AG04449 (cell line): ENCODE measurements at regions of chr6 and their contacts with region 1.

Region 1: DNA sequence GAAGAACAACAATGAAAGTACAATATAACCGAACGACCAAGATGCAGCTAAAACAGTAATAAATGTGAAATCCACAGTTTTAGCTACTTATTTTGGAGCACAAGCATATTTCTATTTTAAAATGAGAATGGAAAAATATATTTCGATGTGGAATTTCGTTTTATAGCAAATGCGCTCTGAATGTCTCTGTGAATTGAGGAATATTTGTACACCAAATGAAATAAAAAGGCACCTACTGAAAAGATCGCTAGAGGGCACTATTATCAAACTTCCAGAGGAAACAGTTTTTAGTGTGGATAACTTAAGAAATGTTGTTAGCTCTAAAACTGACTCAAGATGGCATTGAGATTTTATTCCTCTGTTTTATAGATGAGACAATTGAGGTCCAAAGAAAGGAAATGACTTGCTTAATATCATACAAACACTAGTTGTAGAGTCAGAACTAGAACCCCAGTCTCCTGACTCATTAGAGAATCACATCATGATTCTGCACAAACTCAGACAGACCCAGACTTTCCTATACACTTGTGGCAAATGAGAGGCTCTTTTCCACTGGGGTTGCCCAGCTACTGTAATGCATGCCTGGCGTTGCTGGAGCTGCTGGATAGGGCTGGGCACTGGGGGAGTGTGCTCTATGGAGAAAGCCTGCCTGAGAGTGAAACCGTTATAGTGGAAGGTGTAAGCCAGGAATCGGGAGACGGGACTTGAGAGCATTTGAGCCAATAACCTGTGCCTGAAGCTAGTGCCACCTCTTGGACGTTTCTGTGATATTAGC is 51.9 kb downstream of the GCLC start:
- DNase-seq: no peak
- H3K4me3 ChIP-seq: peak overlapping the region; percentile 31
- CTCF ChIP-seq: peak; percentile 35

Region 2: DNA sequence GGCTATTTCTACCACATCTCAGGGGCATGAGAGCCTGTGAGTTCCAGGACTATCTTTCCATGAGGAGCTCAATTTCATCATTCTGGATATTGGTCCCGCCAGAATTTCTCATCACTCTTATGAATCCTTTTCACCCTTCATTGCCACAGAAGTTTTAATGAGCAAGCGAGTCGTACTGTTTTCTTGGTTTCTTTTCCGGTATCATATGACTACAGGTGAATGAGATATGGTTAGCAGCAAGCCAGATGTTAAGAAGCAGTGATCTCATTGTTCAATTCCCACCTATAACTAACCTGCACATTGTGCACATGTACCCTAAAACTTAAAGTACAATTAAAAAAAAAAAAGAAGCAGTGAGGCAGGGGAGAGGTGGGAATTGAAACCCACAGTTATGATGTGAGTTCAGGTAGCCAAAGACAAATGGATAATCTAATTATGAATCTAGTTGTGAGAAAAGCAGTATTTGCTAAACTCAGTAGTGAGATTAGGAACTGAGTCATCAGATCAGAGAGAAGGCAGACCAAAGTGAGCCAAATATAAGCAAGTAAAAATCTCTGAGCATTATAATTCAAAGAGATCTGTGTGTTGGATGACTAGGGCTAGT is 66.3 kb before region 1 on chr6:
- CTCF ChIA-PET with region 1: no interaction called
- POLR2A ChIA-PET with region 1: no interaction called
- DNase-seq: no peak
- H3K4me3 ChIP-seq: no peak overlapping the region
- CTCF ChIP-seq: no peak

Region 3: DNA sequence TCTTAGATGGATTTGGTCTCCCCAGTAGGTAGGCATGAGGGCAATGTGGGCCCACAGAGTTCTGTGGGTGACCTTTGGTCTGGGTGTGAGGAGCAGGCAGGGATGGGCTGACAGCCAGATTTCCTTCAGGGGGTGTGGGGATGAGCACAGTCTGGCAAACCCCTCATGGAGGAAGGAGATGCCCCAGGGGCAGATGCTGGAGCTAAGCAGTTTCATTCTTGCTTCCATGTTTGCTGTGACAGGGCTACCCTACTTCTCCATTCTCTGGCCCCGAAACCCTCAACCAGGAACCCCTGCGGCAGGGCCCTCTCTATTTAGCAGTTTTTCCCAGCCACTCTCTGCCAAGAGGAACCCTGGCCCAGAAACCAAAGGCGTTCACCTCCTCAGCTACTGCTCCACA is 11.5 kb after region 1 on chr6:
- CTCF ChIA-PET with region 1: interaction called, 14 read pairs
- POLR2A ChIA-PET with region 1: no interaction called
- DNase-seq: no peak
- H3K4me3 ChIP-seq: no peak overlapping the region
- CTCF ChIP-seq: no peak

Region 4: DNA sequence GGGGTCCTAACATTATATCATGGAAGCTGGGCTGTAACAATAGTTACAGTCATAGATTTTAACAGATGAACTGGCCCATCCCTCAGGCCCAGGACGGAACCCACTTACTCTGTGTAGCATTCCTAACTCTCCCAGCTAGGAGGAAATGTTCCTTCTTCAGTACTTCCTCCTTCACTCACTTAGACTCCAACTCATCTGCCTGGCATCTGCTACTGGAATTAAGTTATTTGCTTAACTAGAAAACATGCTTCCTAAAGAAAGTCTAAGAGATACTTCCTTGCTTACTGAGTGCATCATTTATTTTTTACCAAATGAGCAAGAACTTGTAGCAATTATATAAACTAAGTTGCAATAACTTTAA is 31.4 kb after region 1 on chr6:
- CTCF ChIA-PET with region 1: interaction called, 30 read pairs
- POLR2A ChIA-PET with region 1: interaction called, 3 read pairs
- DNase-seq: peak; percentile 45
- H3K4me3 ChIP-seq: no peak overlapping the region
- CTCF ChIP-seq: no peak

Region 5: GRCh38 chr6:53643481-53643965 is 150.5 kb after region 1 on chr6:
- CTCF ChIA-PET with region 1: interaction called, 267 read pairs
- POLR2A ChIA-PET with region 1: no interaction called
- DNase-seq: no peak
- H3K4me3 ChIP-seq: no peak overlapping the region
- CTCF ChIP-seq: no peak

Region 6: GRCh38 chr6:53679446-53679933 is 186.4 kb after region 1 on chr6:
- CTCF ChIA-PET with region 1: interaction called, 18 read pairs
- POLR2A ChIA-PET with region 1: no interaction called
- DNase-seq: no peak
- H3K4me3 ChIP-seq: no peak overlapping the region
- CTCF ChIP-seq: peak; percentile 13

Region 7: GRCh38 chr6:55299286-55299985 is 1806.4 kb after region 1 on chr6:
- CTCF ChIA-PET with region 1: no interaction called
- POLR2A ChIA-PET with region 1: no interaction called
- DNase-seq: no peak
- H3K4me3 ChIP-seq: no peak overlapping the region
- CTCF ChIP-seq: no peak